OCI-LY7 (cell line): ENCODE measurements at regions of chr5 and their contacts with region 1.

Region 1: GRCh38 chr5:119022017-119022745 is 33.8 kb upstream of the DTWD2 start:
- DNase-seq: peak; percentile 79
- H3K4me3 ChIP-seq: no peak overlapping the region
- H3K27ac ChIP-seq: peak overlapping the region; percentile 71
- H3K4me1 ChIP-seq: peaks cover 73% of the 10 kb centered on the region
- CTCF ChIP-seq: peak; percentile 94

Region 2: DNA sequence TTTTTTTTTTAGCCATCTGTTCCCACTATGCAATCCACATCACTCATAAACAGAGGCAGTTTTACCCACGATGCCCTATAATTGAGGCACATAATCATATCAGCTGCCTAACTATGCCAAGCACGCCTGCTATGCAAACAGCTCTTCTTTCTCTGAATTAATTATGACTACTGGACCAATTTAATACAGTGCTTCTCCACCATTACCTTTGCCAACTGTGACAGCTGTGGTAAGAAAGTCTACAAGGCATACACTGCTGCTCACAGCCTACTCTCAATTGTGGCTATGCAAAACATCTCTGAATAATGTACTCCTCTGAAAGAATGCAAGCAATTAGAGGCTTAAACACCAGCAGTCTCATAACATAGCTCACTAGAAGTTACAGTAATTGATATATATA is 130.9 kb before region 1 on chr5:
- CTCF ChIA-PET with region 1: no interaction called
- POLR2A ChIA-PET with region 1: no interaction called
- intact Hi-C with region 1: no loop called
- DNase-seq: no peak
- H3K4me3 ChIP-seq: no peak overlapping the region
- H3K27ac ChIP-seq: no peak overlapping the region
- H3K4me1 ChIP-seq: no peaks in the 10 kb centered on the region
- CTCF ChIP-seq: no peak

Region 3: DNA sequence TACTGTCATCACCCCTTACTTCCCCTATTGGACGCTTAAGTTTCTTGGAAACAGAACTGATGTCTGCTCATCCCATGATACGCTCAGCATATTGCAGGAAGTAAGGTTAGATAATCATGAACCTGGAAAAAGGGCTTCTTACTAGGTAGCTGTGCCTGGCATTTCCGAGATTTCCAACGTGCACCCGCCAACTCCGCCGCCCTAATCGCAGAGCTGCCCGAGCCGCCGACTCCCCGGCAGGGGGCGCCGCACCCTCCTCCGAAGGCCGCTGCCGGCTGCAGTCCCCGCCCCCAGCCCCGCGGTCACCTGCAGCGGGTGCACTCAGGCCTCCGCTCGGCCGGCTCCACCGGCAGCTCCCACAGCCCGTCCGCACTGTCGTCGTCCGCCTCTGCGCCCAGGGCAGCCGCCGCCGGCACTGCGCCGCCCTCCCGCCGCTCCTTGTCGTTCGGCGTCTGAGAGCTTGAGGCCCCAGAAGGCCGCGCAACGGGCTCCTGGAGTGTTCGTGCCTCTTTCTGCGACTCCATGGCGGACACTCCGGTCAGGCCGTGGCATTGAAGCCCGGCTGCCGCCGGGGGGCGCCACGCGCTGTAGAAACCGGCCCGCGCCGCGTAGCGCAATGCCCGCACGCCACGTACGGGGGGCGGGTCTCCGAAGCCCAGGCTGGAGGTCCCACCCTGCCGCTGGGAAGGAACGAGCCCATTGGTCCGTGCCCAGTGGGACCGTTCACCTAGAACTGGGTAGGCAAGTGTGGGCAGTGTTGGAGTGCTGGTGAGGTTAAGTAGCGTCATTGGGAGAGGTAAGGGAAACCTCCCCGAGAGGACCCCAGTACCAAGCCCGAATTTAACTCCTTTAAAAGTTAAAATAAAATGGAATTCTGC is 34.0 kb before region 1 on chr5 and contains the start of gene DTWD2:
- CTCF ChIA-PET with region 1: interaction called, 13 read pairs
- POLR2A ChIA-PET with region 1: interaction called, 11 read pairs
- intact Hi-C with region 1: loop called (anchors 1 kb)
- DNase-seq: peak; percentile 96
- H3K4me3 ChIP-seq: peak within 1 kb of the TSS; percentile 75
- H3K27ac ChIP-seq: peak within 1 kb of the TSS; percentile 77
- H3K4me1 ChIP-seq: peaks cover 33% of the 10 kb centered on the region
- CTCF ChIP-seq: peak; percentile 98
- total RNA-seq, gene DTWD2: 4.2 and 8.6 TPM in 2 replicates

Region 4: DNA sequence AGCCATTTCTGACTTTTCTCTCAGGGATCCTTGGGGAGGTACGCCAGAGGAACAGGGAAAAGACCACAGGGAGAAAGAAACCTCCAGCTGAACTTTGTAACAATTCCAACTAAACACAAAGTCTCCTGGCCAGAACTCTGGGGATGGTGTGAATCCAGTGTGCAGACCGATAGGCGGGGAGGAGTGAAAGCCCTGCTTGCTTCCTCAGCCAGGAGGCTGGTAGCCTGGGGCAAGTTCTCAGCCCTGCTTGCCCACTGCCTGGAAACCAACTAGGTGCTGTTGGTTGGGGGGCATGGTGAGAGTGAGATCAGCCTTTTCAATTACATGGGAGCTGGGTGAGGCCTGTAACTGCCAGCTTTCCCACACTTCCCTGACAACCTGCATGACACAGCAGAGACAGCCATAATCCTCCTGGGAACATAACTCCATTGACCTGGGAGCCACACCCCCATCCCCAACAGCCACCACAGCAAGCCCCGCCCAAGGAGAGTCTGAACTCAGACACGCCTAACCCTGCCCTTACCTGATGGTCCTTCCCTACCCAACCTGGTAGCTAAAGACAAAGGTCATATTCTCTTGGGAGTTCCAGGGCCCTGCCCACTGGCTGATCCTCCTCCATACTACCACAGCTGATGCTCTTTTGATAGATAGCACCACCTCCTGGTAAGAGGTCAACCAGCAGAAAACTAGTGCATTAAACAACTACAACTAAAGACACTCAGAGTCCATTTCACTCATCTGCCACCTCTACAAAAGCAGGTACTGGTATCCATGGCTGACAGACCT is 233.6 kb after region 1 on chr5:
- CTCF ChIA-PET with region 1: no interaction called
- POLR2A ChIA-PET with region 1: interaction called, 4 read pairs
- intact Hi-C with region 1: loop called (anchors 1 kb)
- DNase-seq: peak; percentile 54
- H3K4me3 ChIP-seq: no peak overlapping the region
- H3K27ac ChIP-seq: no peak overlapping the region
- H3K4me1 ChIP-seq: no peaks in the 10 kb centered on the region
- CTCF ChIP-seq: peak; percentile 74

Region 5: GRCh38 chr5:119302916-119303897 is 281.0 kb after region 1 on chr5:
- CTCF ChIA-PET with region 1: no interaction called
- POLR2A ChIA-PET with region 1: interaction called, 4 read pairs
- intact Hi-C with region 1: loop called (anchors 10 kb)
- DNase-seq: no peak
- H3K4me3 ChIP-seq: no peak overlapping the region
- H3K27ac ChIP-seq: no peak overlapping the region
- H3K4me1 ChIP-seq: peaks cover 60% of the 10 kb centered on the region
- CTCF ChIP-seq: no peak

Region 6: DNA sequence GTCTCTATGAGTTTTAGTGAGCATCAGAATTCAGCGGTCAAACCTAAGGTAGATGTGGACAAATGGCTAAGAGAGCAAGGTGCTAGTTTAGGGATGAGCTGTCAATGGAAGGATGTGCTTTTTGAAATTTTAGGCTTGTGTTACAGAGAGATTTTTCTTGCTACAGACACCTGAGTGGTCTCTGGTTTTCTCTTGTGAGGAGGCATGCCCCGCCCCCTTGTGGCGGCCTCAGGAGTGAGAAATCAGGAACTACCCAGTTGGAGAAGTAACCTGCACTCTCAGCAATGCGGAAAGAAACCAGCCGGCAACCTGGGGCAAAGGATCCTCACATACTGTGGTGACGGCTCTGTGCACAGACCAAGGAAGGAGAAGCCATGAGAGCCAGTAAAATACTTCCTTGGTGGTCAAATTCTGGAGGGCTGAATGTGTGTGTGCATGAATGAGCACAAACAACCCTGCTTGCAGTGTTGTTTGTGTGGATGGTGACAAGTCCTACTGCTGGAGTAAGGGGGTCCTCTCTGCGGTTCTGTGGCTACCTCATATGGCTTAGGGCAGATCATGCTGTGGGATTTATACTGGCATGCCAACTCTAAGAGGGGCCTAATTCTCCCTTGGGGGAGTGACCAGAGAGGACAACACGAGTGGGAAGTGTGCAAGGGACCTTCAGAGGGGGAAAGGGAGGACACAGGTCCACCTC is 413.4 kb after region 1 on chr5:
- CTCF ChIA-PET with region 1: no interaction called
- POLR2A ChIA-PET with region 1: interaction called, 3 read pairs
- intact Hi-C with region 1: loop called (anchors 1 kb)
- DNase-seq: peak; percentile 80
- H3K4me3 ChIP-seq: no peak overlapping the region
- H3K27ac ChIP-seq: no peak overlapping the region
- H3K4me1 ChIP-seq: no peaks in the 10 kb centered on the region
- CTCF ChIP-seq: peak; percentile 92